ENCODE measurements at regions of chr9 and their contacts with region 1.

Region 1: GRCh38 chr9:73543727-73544126 is 392.1 kb downstream of the ANXA1 start:
- DNase-seq: no peak
- H3K4me3 ChIP-seq: no peak overlapping the region
- H3K27ac ChIP-seq: no peak overlapping the region
- H3K4me1 ChIP-seq: no peaks in the 10 kb centered on the region
- H3K27me3 ChIP-seq: no peaks in the 10 kb centered on the region
- CTCF ChIP-seq: no peak

Region 2: DNA sequence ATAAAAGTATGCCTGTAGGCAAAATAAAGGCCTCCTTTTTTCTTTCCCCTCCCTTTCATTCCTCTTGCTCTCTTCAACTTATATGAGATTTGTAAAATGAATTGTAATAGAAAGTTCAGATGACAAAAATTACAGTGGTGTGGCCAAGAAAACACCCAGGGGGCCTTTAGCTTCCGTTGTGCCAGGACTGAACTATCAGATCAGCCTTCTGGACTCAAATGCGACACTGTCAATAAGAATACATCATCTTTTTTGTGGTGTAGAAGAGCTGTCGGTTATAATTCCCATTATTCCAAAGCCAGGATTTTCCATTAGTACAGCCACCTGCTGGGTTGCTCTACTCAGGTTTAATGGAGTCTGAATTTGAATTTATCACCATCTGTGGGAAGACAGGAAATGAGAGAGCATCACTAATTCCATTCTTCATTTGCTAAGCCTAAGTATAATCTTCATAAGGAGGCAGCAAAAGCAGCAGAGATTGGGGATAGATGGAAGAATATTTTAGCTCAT is 51.4 kb after region 1 on chr9:
- CTCF ChIA-PET with region 1: interaction called, 12 read pairs
- POLR2A ChIA-PET with region 1: no interaction called
- intact Hi-C with region 1: no loop called
- DNase-seq: no peak
- H3K4me3 ChIP-seq: no peak overlapping the region
- H3K27ac ChIP-seq: no peak overlapping the region
- H3K4me1 ChIP-seq: no peaks in the 10 kb centered on the region
- H3K27me3 ChIP-seq: no peaks in the 10 kb centered on the region
- CTCF ChIP-seq: no peak

Measured in PC-9 (cell line).